Esophagus squamous epithelium (tissue), 5 donors: ENCODE measurements at regions of chr1 and their contacts with region 1.

Region 1: GRCh38 chr1:9942939-9943788 is at the starts of genes LZIC and NMNAT1:
- DNase-seq: peak; percentile 63
- H3K4me3 ChIP-seq: peak within 1 kb of the TSS; percentile 60 to 89 (median 86)
- H3K27ac ChIP-seq: peak within 1 kb of the TSS; percentile 90 to 97 (median 93)
- H3K4me1 ChIP-seq: peaks cover 12 to 28% (median 16%) of the 10 kb centered on the region in 3 donors
- H3K27me3 ChIP-seq: no peaks in the 10 kb centered on the region
- CTCF ChIP-seq: peak in 2 of 6 experiments; percentile 12 to 49
- POLR2A ChIP-seq: peak in 3 of 4 donors; percentile 70 to 87 (median 80)
- total RNA-seq, gene LZIC: 21.4 to 24.7 (median 23.0) TPM
- total RNA-seq, gene NMNAT1: 3.9 to 7.9 (median 6.0) TPM

Region 2: GRCh38 chr1:9852410-9853248 is 90.5 kb before region 1 on chr1:
- intact Hi-C with region 1: no loop called
- DNase-seq: no peak
- H3K4me3 ChIP-seq: no peak overlapping the region
- H3K27ac ChIP-seq: no peak overlapping the region
- H3K4me1 ChIP-seq: no peaks in the 10 kb centered on the region
- H3K27me3 ChIP-seq: no peaks in the 10 kb centered on the region
- CTCF ChIP-seq: no peak
- POLR2A ChIP-seq: no peak

Region 3: GRCh38 chr1:9874959-9875635 is 68.1 kb before region 1 on chr1:
- intact Hi-C with region 1: loop called (anchors 5 kb)
- DNase-seq: no peak
- H3K4me3 ChIP-seq: peak overlapping the region in 3 of 4 donors; percentile 19 to 46 (median 24)
- H3K27ac ChIP-seq: peak overlapping the region; percentile 32 to 89 (median 64)
- H3K4me1 ChIP-seq: peaks cover 37 to 94% (median 46%) of the 10 kb centered on the region in 3 donors
- H3K27me3 ChIP-seq: no peaks in the 10 kb centered on the region
- CTCF ChIP-seq: peak; percentile 88 to 97 (median 96)
- POLR2A ChIP-seq: no peak